ENCODE measurements at regions of chr17 and their contacts with region 1.

Region 1: GRCh38 chr17:37527249-37527851 is 37.7 kb downstream of the DUSP14 start:
- DNase-seq: peak; percentile 26
- H3K4me3 ChIP-seq: no peak overlapping the region
- H3K27ac ChIP-seq: no peak overlapping the region
- H3K27me3 ChIP-seq: no peaks in the 10 kb centered on the region
- CTCF ChIP-seq: peak; percentile 82

Region 2: GRCh38 chr17:37406635-37407461 is 120.5 kb before region 1 on chr17 and contains the starts of genes ACACA and TADA2A:
- CTCF ChIA-PET with region 1: no interaction called
- POLR2A ChIA-PET with region 1: no interaction called
- DNase-seq: no peak
- H3K4me3 ChIP-seq: peak within 1 kb of the TSS; percentile 87
- H3K27ac ChIP-seq: peak within 1 kb of the TSS; percentile 59
- H3K27me3 ChIP-seq: no peaks in the 10 kb centered on the region
- CTCF ChIP-seq: no peak
- polyA plus RNA-seq, gene ACACA: 53.6 and 57.9 TPM in 2 replicates
- polyA plus RNA-seq, gene TADA2A: 18.1 and 21.4 TPM in 2 replicates

Region 3: DNA sequence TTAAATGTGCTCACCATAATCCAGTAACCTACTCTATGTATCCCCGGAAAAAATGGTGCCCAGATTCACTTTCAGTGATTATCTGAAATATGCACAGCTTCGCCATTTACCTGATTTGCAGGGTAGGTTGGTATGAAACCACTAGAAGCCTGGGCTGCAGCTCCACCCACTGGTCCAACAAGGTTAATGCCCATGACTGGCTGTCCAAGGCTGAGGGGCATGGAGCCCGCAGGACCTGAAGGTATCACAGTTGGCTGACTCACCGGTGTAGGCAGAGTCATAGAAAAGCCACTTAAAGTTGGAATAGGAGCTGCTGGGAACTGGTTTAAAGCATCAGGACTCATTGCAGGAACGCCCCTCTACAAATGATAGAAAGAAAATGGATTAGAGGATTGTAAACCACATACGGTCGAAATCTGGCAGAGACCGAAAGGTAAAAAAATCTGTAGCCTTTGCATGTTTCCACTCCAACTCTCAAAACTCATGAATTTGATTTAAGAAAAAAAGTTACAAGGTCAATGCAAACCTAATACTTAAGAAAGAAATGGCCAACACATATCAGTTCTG is 43.3 kb after region 1 on chr17:
- CTCF ChIA-PET with region 1: interaction called, 12 read pairs
- POLR2A ChIA-PET with region 1: no interaction called
- DNase-seq: peak; percentile 4
- H3K4me3 ChIP-seq: no peak overlapping the region
- H3K27ac ChIP-seq: no peak overlapping the region
- H3K27me3 ChIP-seq: no peaks in the 10 kb centered on the region
- CTCF ChIP-seq: peak; percentile 51

Region 4: GRCh38 chr17:37609170-37610040 is 82.1 kb after region 1 on chr17 and contains the start of gene SYNRG:
- CTCF ChIA-PET with region 1: interaction called, 17 read pairs
- POLR2A ChIA-PET with region 1: interaction called, 3 read pairs
- DNase-seq: peak; percentile 86
- H3K4me3 ChIP-seq: peak within 1 kb of the TSS; percentile 88
- H3K27ac ChIP-seq: peak within 1 kb of the TSS; percentile 72
- H3K27me3 ChIP-seq: no peaks in the 10 kb centered on the region
- CTCF ChIP-seq: peak; percentile 43
- polyA plus RNA-seq, gene SYNRG: 24.9 and 26.2 TPM in 2 replicates

Region 5: GRCh38 chr17:37661400-37662014 is 134.2 kb after region 1 on chr17:
- CTCF ChIA-PET with region 1: no interaction called
- POLR2A ChIA-PET with region 1: no interaction called
- DNase-seq: no peak
- H3K4me3 ChIP-seq: no peak overlapping the region
- H3K27ac ChIP-seq: no peak overlapping the region
- H3K27me3 ChIP-seq: no peaks in the 10 kb centered on the region
- CTCF ChIP-seq: no peak